ENCODE measurements at regions of chr12 and their contacts with region 1.

Region 1: GRCh38 chr12:93502802-93503623 is 35.7 kb downstream of the MRPL42 start:
- DNase-seq: peak; percentile 64
- H3K4me3 Mint-ChIP-seq: no peak overlapping the region
- H3K27ac Mint-ChIP-seq: no peak overlapping the region
- H3K4me1 Mint-ChIP-seq: peaks cover 10% of the 10 kb centered on the region
- H3K27me3 Mint-ChIP-seq: no peaks in the 10 kb centered on the region

Region 2: DNA sequence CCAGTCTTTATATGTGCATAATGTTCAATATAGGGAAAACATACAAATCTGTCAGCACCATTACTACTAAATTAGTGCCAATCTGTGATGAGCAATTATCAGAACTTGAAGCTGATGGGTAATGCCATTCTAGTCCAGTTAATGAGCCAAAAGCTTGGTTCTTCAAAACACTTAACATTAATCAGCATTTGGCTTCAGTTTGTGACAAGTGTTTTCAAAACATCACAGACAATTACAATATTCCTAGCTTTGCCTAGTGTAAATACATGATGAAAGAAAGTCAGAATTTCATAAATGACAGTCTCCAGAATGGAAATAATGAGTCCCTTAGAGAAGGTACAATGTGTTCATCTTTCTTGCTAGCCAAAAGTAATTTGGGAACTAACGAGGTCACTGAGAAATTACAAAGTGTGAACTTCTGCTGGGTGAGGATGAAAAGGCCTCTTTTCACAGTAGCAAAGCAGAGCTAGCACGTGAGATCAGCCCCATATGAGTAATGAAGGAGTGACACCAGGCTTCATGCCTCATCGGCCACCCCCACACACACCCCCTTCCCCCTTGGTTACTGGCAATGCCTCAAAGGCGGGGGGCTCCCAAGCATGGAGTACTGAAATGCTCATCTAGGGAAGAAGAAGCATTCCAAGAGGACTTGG is 393.3 kb before region 1 on chr12:
- CTCF ChIA-PET with region 1: no interaction called
- POLR2A ChIA-PET with region 1: no interaction called
- intact Hi-C with region 1: no loop called
- DNase-seq: peak; percentile 68
- H3K4me3 Mint-ChIP-seq: no peak overlapping the region
- H3K27ac Mint-ChIP-seq: peak overlapping the region; percentile 75
- H3K4me1 Mint-ChIP-seq: peaks cover 19% of the 10 kb centered on the region
- H3K27me3 Mint-ChIP-seq: no peaks in the 10 kb centered on the region

Region 3: DNA sequence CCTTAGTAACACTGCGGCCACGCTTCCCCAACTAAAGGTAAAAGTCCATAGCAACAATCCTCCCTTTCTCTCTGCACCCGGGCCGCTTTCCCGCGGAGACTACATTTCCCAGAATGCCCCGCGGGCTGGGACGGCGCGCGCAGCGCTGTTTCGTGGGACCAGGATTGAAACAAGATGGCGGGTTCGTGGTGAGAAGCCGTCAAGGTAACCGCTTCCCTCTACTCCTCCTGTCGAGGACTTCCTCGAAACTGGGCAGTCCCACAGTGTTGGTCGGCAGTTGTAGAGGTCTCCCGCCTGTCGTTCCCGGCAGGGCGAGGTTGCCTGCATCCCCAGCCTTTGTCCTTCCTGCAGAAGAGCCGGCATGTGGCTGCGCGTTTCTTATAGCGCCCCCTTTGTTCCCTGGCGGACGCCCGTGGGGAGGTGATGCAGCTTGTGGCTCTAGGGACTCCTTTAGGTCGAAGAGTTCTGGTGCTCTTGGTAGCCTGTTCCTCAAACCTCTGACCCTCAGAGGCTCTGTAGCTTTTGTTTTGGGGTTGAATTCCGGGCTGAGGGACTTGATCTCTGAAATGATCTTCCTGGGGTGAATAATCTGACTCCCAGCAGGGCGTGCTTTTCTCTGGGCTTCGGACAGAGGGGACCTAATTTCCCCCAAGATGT is 35.5 kb before region 1 on chr12 and contains the start of gene MRPL42:
- CTCF ChIA-PET with region 1: interaction called, 11 read pairs
- POLR2A ChIA-PET with region 1: no interaction called
- intact Hi-C with region 1: no loop called
- DNase-seq: peak; percentile 95
- H3K4me3 Mint-ChIP-seq: peak within 1 kb of the TSS; percentile 93
- H3K27ac Mint-ChIP-seq: peak within 1 kb of the TSS; percentile 88
- H3K4me1 Mint-ChIP-seq: peaks cover 29% of the 10 kb centered on the region
- H3K27me3 Mint-ChIP-seq: no peaks in the 10 kb centered on the region
- total RNA-seq, gene MRPL42: 65.0 to 67.6 TPM

Region 4: GRCh38 chr12:93514853-93515252 is 11.8 kb after region 1 on chr12:
- CTCF ChIA-PET with region 1: interaction called, 19 read pairs
- POLR2A ChIA-PET with region 1: no interaction called
- intact Hi-C with region 1: no loop called
- DNase-seq: no peak
- H3K4me3 Mint-ChIP-seq: no peak overlapping the region
- H3K27ac Mint-ChIP-seq: no peak overlapping the region
- H3K4me1 Mint-ChIP-seq: no peaks in the 10 kb centered on the region
- H3K27me3 Mint-ChIP-seq: no peaks in the 10 kb centered on the region

Region 5: GRCh38 chr12:93766796-93767523 is 263.9 kb after region 1 on chr12:
- CTCF ChIA-PET with region 1: interaction called, 23 read pairs
- POLR2A ChIA-PET with region 1: no interaction called
- intact Hi-C with region 1: loop called (anchors 5 kb)
- DNase-seq: peak; percentile 48
- H3K4me3 Mint-ChIP-seq: no peak overlapping the region
- H3K27ac Mint-ChIP-seq: peak overlapping the region; percentile 44
- H3K4me1 Mint-ChIP-seq: peaks cover 30% of the 10 kb centered on the region
- H3K27me3 Mint-ChIP-seq: no peaks in the 10 kb centered on the region

Region 6: GRCh38 chr12:94074980-94075928 is 572.2 kb after region 1 on chr12:
- CTCF ChIA-PET with region 1: interaction called, 23 read pairs
- POLR2A ChIA-PET with region 1: no interaction called
- intact Hi-C with region 1: no loop called
- DNase-seq: peak; percentile 24
- H3K4me3 Mint-ChIP-seq: no peak overlapping the region
- H3K27ac Mint-ChIP-seq: no peak overlapping the region
- H3K4me1 Mint-ChIP-seq: peaks cover 16% of the 10 kb centered on the region
- H3K27me3 Mint-ChIP-seq: peaks cover 8% of the 10 kb centered on the region

Measured in activated CD4-positive, alpha-beta memory T cell treated with anti-CD3 and anti-CD28 coated beads for 36 hours (primary cell).